Activated CD4-positive, alpha-beta T cell treated with anti-CD3 and anti-CD28 coated beads, Interleukin-2, amount 10 ng/mL, durations not matched to agents 24 days and 14 days (primary cell): ENCODE measurements at regions of chr4 and their contacts with region 1.

Region 1: GRCh38 chr4:6180841-6181631 is 19.3 kb downstream of the JAKMIP1 start:
- DNase-seq: peak; percentile 90
- H3K4me3 Mint-ChIP-seq: peak overlapping the region; percentile 69
- H3K27ac Mint-ChIP-seq: peak overlapping the region; percentile 92
- H3K4me1 Mint-ChIP-seq: peaks cover 73% of the 10 kb centered on the region
- H3K27me3 Mint-ChIP-seq: no peaks in the 10 kb centered on the region

Region 2: DNA sequence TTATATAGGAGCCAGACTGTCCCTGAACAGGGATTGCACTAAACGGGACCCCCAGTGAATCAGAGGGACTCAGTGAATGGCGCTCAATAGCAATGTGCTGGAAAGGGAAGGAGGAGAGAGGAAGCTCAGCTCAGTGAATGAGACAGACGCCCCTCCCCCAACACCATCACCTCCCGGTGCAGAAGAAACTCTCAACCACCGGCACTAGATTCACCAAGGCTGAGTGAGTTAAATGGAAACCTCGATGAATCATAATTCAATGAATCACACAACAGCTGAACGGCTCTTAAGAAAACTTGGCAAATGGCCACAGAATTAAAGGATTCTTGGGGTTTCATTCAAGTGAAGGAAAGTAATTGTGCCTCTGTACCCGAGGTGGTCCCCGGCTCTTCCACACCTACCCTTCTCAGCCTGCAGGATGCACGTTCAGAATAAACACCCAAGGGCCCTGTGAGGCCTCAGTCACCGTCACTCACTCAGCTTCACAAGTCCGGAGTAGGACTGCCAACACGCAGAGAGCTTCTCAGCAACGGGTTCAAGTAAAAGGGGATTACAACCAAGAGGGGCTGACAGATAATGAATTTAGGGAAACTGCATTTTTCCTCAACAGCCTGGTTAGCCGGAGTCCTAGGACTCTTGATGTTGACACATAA is 317.4 kb before region 1 on chr4:
- intact Hi-C with region 1: loop called (anchors 10 kb)
- DNase-seq: peak; percentile 83
- H3K4me3 Mint-ChIP-seq: peak overlapping the region; percentile 39
- H3K27ac Mint-ChIP-seq: no peak overlapping the region
- H3K4me1 Mint-ChIP-seq: peaks cover 33% of the 10 kb centered on the region
- H3K27me3 Mint-ChIP-seq: peaks cover 4% of the 10 kb centered on the region

Region 3: DNA sequence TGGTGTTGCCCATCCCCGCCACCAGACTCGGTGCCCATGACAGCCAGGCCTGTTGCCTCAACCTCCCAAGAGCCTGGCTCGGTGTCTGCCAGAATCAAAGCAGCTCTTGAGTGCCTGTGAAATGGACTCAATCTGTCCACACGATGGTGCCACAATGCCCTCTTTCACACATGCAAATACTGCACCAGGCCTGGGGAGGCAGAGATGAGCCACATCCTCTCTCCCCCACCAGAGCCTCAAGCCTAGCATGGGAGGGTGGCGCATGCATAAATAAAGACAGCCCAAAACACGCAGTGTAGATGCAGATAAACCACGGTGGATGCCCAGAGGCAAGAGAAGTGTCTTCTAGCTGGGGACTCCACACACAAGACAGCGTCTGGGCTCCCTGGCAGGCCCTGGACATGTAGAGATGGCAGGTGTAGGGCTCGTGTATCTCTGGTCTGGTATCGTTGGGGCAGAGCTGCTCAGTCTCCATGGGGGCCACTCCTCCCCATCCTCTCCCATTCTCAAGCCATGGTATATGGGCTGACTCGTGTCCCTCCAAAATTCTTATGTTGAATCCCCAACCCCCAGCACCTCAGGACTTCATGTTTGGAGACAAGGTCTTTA is 46.3 kb before region 1 on chr4:
- intact Hi-C with region 1: loop called (anchors 5 kb)
- DNase-seq: peak; percentile 83
- H3K4me3 Mint-ChIP-seq: no peak overlapping the region
- H3K27ac Mint-ChIP-seq: peak overlapping the region; percentile 39
- H3K4me1 Mint-ChIP-seq: peaks cover 15% of the 10 kb centered on the region
- H3K27me3 Mint-ChIP-seq: no peaks in the 10 kb centered on the region

Region 4: GRCh38 chr4:6198768-6199421 is 17.9 kb after region 1 on chr4:
- intact Hi-C with region 1: loop called (anchors 1 kb)
- DNase-seq: peak; percentile 73
- H3K4me3 Mint-ChIP-seq: peak overlapping the region; percentile 85
- H3K27ac Mint-ChIP-seq: peak overlapping the region; percentile 75
- H3K4me1 Mint-ChIP-seq: peaks cover 29% of the 10 kb centered on the region
- H3K27me3 Mint-ChIP-seq: peaks cover 25% of the 10 kb centered on the region